ENCODE measurements at regions of chr5 and their contacts with region 1.

Region 1: DNA sequence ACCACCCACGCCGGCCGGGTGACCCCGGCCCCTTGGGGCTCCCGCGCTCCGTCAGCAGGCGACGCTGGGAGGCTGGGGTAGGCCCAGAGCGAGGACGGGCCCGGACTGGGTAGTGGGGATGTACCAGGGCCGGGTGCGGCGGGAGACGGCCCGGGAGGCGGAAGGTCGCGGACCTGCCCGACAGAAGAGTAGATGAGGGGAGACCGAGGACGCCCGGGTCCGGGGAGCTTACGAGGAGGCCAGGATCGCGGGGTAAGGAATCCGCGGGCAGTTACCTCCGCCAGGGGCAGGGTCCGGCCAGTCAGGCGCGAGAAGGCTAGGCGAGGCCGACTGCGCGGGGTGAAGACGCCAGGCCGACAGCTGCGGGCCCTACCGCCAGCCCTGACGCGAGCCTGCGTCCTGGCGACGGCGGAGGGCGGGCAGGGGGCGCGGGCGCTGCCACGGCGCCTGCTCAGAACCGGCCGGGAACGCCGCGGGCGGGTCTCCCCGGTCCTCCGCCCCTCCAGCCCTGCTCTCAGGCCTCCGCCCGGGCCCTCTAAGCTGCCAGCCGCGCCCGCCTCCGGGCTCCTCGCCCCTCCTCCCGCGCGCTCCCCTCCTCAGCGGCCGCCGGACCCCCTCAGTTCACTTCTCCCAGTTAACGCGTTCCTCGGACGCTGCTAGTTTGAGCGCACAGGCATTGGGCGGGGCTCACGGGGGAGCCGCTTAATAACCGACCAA is at the start of gene CPLANE1:
- DNase-seq: peak; percentile 87
- H3K4me3 ChIP-seq: peak within 1 kb of the TSS; percentile 96 to 97 (median 96)
- H3K27ac ChIP-seq: peak within 1 kb of the TSS; percentile 85
- H3K4me1 ChIP-seq: peaks cover 6% of the 10 kb centered on the region
- H3K27me3 ChIP-seq: no peaks in the 10 kb centered on the region
- CTCF ChIP-seq: no peak
- POLR2A ChIP-seq: peak; percentile 97
- total RNA-seq, gene CPLANE1: 16.9 and 21.5 TPM in 2 replicates

Region 2: DNA sequence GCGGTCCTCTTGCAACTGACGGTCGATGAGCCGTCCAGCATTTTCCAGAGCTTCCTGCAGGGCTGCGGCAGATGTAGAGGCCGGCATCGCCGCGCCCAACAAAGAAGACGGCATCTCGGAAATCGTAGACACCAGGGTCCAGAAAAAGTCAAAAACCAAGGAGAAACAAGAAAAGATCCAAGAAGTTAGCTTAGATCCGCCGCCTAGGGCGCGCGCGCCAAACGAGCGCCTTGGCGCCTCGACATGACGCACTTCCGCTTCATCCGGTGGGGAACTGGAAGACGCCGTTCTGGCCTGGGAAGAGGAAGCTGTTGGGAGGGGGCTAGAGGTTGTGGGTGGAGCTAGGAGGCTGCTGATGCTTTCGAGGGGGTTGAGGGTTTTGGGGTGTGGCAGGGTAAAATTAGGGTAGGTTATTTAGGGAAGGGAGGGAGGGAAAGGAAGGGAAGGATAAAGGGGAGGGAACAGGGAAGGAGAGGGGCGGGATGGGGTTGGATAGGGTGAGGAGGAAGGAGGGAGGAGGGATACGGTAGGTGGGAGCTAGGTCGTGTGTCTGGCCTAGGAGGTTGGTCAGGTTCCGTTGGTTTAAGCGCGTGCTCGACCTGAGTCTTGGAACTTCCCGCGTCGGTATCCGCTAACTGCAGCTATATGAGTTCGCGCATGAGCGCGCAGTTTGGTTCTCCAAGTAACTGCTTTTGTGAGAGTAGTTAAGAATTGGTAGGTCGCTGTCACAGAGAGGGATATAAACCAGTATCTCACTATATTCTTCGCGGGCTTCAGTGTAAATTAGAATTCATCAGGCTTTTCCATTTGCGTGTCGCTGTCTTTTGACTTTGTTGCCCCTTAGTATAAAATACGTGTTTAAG is 122.0 kb after region 1 on chr5 and contains the start of gene NUP155:
- CTCF ChIA-PET with region 1: no interaction called
- POLR2A ChIA-PET with region 1: no interaction called
- dilution Hi-C with region 1: no loop called
- intact Hi-C with region 1: loop called (anchors 5 kb)
- DNase-seq: peak; percentile 94
- H3K4me3 ChIP-seq: peak within 1 kb of the TSS; percentile 72 to 97 (median 88)
- H3K27ac ChIP-seq: peak within 1 kb of the TSS; percentile 97
- H3K4me1 ChIP-seq: peaks cover 16% of the 10 kb centered on the region
- H3K27me3 ChIP-seq: no peaks in the 10 kb centered on the region
- CTCF ChIP-seq: no peak
- POLR2A ChIP-seq: peak; percentile 86
- total RNA-seq, gene NUP155: 35.5 and 36.6 TPM in 2 replicates